AG04449 (cell line): ENCODE measurements at regions of chr10 and their contacts with region 1.

Region 1: DNA sequence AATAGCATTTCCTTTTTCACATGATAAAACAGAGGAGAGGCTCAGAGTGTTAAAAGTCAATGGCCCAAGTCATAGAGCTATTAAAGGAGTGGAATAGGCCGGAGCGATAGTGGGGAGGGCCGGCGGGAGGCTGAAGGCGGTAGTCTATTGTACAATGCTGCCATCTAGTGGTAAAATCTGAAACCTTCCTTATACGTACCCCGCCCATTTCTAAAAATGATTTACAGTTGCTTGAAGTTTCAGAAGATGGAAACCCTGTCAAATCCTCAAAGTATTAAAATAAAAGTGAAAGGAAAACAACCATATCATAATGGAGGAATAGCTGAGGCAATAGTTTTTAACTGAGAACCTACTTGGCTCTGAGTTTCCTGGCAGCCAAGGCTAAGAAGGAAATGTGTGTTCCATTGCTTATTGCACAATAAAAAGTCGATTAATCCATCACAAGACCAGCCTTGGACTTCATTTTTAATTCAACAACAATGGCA is 209.1 kb downstream of the CCSER2 start:
- DNase-seq: no peak
- H3K4me3 ChIP-seq: no peak overlapping the region
- CTCF ChIP-seq: peak; percentile 53

Region 2: GRCh38 chr10:84328418-84329195 is 208.9 kb before region 1 on chr10 and contains the start of gene CCSER2:
- CTCF ChIA-PET with region 1: interaction called, 18 read pairs
- POLR2A ChIA-PET with region 1: no interaction called
- DNase-seq: no peak
- H3K4me3 ChIP-seq: peak within 1 kb of the TSS; percentile 67
- CTCF ChIP-seq: peak; percentile 9

Region 3: DNA sequence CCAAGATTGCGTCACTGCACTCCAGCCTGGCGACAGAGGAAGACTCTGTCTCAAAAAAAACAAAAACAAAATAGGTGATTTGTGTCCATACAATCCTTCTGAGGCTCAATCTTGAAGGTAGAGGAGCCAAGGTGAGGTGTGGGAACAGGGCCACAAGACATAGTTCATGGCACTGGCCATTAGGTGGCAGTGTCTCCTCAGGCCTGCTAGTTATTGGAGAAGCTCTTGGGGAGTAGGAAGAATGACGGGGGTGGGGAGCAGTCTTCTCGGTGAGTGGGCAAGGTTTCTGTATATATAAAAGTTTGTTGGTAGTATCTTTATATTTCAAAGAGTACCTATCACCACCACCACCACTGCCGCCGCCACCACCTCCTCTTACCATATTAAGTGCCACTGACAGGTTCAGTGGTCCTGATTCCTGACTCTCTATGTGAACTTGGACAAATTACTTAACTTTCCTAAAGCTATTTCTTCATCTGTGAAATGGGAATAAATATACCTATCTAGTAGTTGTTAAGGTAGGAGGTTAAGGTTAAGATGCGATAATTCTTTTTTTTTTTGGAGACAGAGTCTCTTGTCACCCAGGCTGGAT is 185.1 kb before region 1 on chr10:
- CTCF ChIA-PET with region 1: interaction called, 132 read pairs
- POLR2A ChIA-PET with region 1: interaction called, 3 read pairs
- DNase-seq: no peak
- H3K4me3 ChIP-seq: no peak overlapping the region
- CTCF ChIP-seq: peak; percentile 86

Region 4: GRCh38 chr10:84388148-84388547 is 149.3 kb before region 1 on chr10:
- CTCF ChIA-PET with region 1: interaction called, 21 read pairs
- POLR2A ChIA-PET with region 1: no interaction called
- DNase-seq: no peak
- H3K4me3 ChIP-seq: no peak overlapping the region
- CTCF ChIP-seq: no peak

Region 5: DNA sequence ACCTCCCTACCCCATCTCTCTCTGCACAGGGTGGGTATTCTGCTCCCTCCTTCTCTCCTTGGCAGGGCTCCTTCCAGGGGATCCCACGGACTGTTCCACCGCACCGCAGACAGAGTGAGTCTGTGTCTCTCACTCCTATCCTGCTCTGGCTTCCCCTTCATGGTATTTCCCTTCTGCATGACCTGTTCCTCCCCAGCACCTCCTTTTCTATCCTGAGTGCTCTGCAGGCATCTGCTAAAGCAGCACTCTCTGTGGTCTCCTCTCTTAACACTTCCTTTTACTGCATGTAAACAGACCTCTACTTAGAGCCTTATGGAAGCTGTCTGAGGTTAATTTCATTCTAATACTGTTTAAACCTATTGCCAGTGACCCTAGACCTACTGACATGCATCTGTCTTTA is 37.6 kb before region 1 on chr10:
- CTCF ChIA-PET with region 1: interaction called, 11 read pairs
- POLR2A ChIA-PET with region 1: no interaction called
- DNase-seq: no peak
- H3K4me3 ChIP-seq: no peak overlapping the region
- CTCF ChIP-seq: no peak

Region 6: DNA sequence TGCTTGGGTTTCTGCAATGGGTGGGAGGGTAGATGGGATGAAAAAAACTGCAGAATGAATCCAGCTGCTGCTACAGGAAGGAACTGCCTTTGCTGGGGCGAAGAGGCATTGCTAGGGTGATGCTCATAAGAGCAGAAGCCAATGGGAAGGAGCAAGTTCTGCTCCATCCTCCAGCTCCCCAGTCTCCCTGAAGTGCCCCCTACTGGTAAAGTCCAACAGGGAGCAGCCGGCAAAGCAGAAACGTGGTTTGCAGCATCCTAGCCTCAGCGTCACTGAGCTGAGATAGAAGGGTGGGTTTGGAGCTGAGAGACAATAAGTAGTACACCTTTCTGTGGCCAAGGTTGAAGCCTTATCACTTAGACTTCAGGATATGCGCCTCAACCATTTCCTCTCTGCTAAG is 11.4 kb after region 1 on chr10:
- CTCF ChIA-PET with region 1: interaction called, 15 read pairs
- POLR2A ChIA-PET with region 1: no interaction called
- DNase-seq: no peak
- H3K4me3 ChIP-seq: no peak overlapping the region
- CTCF ChIP-seq: peak; percentile 25

Region 7: DNA sequence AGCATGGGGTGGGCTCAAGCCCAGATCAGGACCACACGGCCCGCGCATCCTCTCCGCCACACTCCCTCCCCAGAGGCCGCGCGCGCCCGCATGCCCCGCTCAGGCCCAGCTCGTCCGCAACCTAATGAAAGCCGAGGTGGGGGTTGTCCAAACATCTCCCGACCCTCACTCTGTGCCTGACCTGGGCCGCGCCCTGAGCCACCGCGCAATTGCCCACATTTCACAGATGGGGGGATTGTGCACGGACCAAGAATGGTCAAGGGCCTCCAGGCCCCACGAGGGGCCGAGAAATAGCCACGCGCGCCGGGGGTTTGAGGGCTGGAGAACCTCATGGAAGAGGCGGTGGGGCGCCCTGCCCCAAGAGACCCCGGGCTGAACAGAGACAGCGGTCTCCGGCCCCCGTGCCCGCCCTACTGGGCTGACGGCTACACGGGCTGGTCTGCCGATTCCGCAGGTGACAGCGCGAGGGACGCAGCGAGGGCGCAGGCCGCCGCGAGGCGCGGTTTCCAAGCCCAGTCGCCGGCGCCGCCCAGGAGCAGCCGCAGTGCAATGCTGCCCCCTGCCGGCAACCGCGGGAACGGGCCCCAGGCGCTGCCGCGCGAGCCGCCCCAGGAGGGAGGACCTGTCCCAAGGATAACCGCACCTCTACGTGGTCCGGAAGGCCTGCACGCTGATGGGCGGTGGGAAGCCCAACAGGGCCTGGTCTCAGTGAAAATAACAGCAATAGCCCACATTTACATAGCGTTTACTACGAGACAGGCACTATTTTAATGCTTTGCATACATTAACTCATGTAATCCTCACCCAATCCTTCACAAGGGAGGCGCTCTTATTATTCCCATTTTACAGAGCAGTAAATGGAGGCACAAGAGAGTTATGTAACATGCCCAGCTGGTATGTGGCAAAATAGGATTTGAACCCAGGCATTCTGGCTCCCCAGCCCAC is 1839.6 kb after region 1 on chr10:
- CTCF ChIA-PET with region 1: interaction called, 19 read pairs
- POLR2A ChIA-PET with region 1: no interaction called
- DNase-seq: no peak
- H3K4me3 ChIP-seq: peak overlapping the region; percentile 36
- CTCF ChIP-seq: peak; percentile 96